CD4-positive, alpha-beta T cell (primary cell): ENCODE measurements at regions of chr1 and their contacts with region 1.

Region 1: DNA sequence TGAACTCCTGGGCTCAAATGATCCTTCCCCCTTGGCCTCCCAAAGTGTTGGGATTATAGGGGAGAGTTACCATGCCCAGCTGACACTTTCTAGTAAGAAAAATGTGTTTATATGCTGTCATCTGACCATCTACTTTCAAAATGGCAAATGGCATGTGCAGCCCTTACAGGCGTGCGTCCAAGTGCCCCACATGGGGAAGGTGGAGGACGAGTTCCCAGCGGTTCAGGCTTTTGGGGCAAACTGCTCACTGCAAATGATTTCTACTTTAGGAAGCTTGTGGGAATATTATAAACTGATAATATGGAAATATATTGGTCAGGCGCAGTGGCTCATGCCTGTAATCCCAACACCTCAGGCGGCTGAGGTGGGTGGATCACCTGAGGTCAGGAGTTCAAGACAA is 41.5 kb upstream of the NADK start:
- DNase-seq: no peak
- ATAC-seq: no peak
- H3K4me3 ChIP-seq: no peak overlapping the region
- H3K4me3 Mint-ChIP-seq: no peak overlapping the region
- H3K27ac ChIP-seq: no peak overlapping the region
- H3K27ac Mint-ChIP-seq: no peak overlapping the region
- H3K4me1 ChIP-seq: no peaks in the 10 kb centered on the region
- H3K4me1 Mint-ChIP-seq: peaks cover 11% of the 10 kb centered on the region
- H3K27me3 ChIP-seq: no peaks in the 10 kb centered on the region
- H3K27me3 Mint-ChIP-seq: no peaks in the 10 kb centered on the region
- CTCF ChIP-seq: no peak

Region 2: GRCh38 chr1:1763657-1764616 is 55.8 kb before region 1 on chr1:
- CTCF ChIA-PET with region 1: no interaction called
- POLR2A ChIA-PET with region 1: no interaction called
- intact Hi-C with region 1: loop called in 1 of 2 experiments (anchors 5 kb)
- DNase-seq: peak in 3 of 14 experiments; percentile 28 to 65 (median 57)
- ATAC-seq: peak; percentile 34
- H3K4me3 ChIP-seq: no peak overlapping the region
- H3K4me3 Mint-ChIP-seq: no peak overlapping the region
- H3K27ac ChIP-seq: no peak overlapping the region
- H3K27ac Mint-ChIP-seq: no peak overlapping the region
- H3K4me1 ChIP-seq: peaks cover 3% of the 10 kb centered on the region
- H3K4me1 Mint-ChIP-seq: peaks cover 5% of the 10 kb centered on the region
- H3K27me3 ChIP-seq: no peaks in the 10 kb centered on the region
- H3K27me3 Mint-ChIP-seq: no peaks in the 10 kb centered on the region
- CTCF ChIP-seq: no peak

Region 3: GRCh38 chr1:1779706-1780597 is 39.8 kb before region 1 on chr1:
- CTCF ChIA-PET with region 1: no interaction called
- POLR2A ChIA-PET with region 1: no interaction called
- intact Hi-C with region 1: no loop called
- DNase-seq: peak; percentile 35 to 90 (median 44)
- ATAC-seq: peak; percentile 47
- H3K4me3 ChIP-seq: peak overlapping the region; percentile 68
- H3K4me3 Mint-ChIP-seq: peak overlapping the region; percentile 93
- H3K27ac ChIP-seq: peak overlapping the region; percentile 82 to 95
- H3K27ac Mint-ChIP-seq: peak overlapping the region; percentile 93
- H3K4me1 ChIP-seq: peaks cover 80% of the 10 kb centered on the region
- H3K4me1 Mint-ChIP-seq: peaks cover 67% of the 10 kb centered on the region
- H3K27me3 ChIP-seq: no peaks in the 10 kb centered on the region
- H3K27me3 Mint-ChIP-seq: no peaks in the 10 kb centered on the region
- CTCF ChIP-seq: no peak

Region 4: DNA sequence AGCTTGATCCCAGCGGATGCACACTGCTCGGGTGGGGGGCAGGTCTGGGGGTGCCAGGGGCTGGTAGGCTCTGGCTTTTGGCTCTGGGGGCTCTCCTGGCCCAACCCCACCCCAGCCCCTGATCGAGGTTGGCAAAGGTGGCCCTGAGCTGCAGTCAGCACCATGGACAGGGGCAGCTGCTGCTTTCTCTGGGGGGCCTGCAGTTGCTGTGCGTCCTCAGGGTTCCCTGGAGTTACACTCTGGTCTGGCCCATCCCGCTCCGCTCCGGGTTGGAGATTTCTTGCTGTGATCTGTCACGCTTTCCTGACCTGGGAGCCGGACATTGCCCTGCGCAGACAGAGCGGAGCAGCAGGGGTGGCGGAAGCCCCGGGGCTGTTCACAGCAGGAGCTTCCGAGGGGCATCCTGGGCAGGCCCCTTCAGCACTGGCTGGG is 648.3 kb after region 1 on chr1:
- CTCF ChIA-PET with region 1: no interaction called
- POLR2A ChIA-PET with region 1: no interaction called
- intact Hi-C with region 1: no loop called
- DNase-seq: peak; percentile 11 to 63 (median 38)
- ATAC-seq: peak; percentile 56
- H3K4me3 ChIP-seq: no peak overlapping the region
- H3K4me3 Mint-ChIP-seq: no peak overlapping the region
- H3K27ac ChIP-seq: no peak overlapping the region
- H3K27ac Mint-ChIP-seq: no peak overlapping the region
- H3K4me1 ChIP-seq: peaks cover 24% of the 10 kb centered on the region
- H3K4me1 Mint-ChIP-seq: peaks cover 7% of the 10 kb centered on the region
- H3K27me3 ChIP-seq: peaks cover 8 to 21% of the 10 kb centered on the region in 2 experiments
- H3K27me3 Mint-ChIP-seq: peaks cover under 1% of the 10 kb centered on the region
- CTCF ChIP-seq: no peak